Left ventricle myocardium inferior (tissue), 1 donor: ENCODE measurements at regions of chrX and their contacts with region 1.

Region 1: DNA sequence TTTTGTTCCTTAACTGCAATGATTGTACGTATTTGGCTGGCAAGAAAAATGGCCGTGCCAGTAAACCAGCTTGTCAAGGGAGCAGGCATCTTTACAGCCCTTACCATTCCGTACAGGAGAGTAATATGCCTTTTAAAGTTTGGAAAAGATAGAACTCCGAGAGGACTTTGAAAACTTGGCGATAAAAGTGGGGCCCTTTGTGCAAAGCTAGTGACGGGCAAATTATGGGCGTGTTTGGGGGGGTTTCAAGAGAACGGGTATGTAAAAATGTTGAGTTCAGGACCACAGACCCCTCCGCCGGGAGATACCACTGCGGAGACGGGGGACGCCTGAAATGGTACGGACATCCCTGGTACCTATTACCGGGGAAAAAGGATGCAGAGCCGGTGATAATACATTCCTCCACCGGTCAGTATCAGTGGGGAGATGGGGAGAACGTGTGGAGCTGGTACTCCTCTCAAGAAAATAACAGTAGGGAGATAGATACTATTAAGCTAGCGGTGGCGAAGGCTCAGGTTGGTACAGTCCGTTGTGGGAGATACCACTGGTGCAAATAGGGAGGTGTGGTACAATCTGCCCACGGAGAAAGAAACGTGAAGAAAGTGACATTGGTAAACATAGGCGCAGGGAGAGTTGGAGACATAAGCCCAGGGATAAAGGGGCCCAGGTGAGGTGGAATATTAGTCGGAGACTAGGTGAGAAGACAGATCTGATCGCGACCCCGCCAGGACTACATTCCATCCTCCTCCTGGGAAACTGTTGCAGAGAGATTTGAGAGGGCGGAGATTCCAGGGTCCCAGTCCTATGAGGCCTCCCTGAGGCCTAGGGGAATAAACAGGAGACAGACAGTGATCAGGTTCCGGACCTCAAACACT is 14.5 kb downstream of the SPACA5 start:
- DNase-seq: peak; percentile 80
- H3K4me3 ChIP-seq: peak overlapping the region; percentile 69
- H3K27ac ChIP-seq: peak overlapping the region; percentile 94
- H3K4me1 ChIP-seq: peaks cover 5% of the 10 kb centered on the region
- H3K27me3 ChIP-seq: no peaks in the 10 kb centered on the region
- CTCF ChIP-seq: no peak

Region 2: GRCh38 chrX:47836164-47837072 is 184.8 kb before region 1 on chrX and contains the start of gene ZNF81:
- intact Hi-C with region 1: loop called (anchors 10 kb)
- DNase-seq: peak; percentile 95
- H3K4me3 ChIP-seq: peak within 1 kb of the TSS; percentile 70
- H3K27ac ChIP-seq: peak within 1 kb of the TSS; percentile 82
- H3K4me1 ChIP-seq: peaks cover 9% of the 10 kb centered on the region
- H3K27me3 ChIP-seq: no peaks in the 10 kb centered on the region
- CTCF ChIP-seq: no peak
- total RNA-seq, gene ZNF81: 5.8 TPM

Region 3: DNA sequence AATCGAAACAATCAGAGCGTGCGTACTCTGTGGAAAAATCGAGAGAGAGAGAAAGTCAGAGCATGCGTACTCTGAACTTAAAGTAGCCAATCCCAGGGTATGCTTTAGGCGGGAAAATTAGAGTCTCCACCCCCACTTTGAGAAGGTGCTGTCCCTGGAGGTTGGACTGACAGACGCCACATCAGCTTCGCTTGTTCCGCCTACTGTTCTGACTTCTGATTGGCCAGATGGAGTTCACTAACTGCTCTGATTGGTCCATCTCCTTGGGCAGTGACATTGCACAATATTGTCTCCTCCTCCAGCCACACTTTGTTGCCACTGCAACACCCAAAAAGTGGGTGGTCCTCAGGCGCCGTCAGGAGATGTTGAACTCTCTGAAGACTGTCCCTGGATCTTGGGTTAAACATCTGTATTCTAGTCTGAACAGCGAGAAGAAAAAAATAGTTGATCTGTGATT is 175.5 kb after region 1 on chrX and contains the start of gene SSX5:
- intact Hi-C with region 1: no loop called
- DNase-seq: no peak
- H3K4me3 ChIP-seq: no peak within 1 kb of the TSS
- H3K27ac ChIP-seq: no peak within 1 kb of the TSS
- H3K4me1 ChIP-seq: no peaks in the 10 kb centered on the region
- H3K27me3 ChIP-seq: no peaks in the 10 kb centered on the region
- CTCF ChIP-seq: no peak
- total RNA-seq, gene SSX5: not detected